ENCODE measurements at regions of chr20 and their contacts with region 1.

Region 1: GRCh38 chr20:14853079-14853478 is 515.7 kb upstream of the FLRT3 start:
- DNase-seq: no peak
- ATAC-seq: no peak

Region 2: DNA sequence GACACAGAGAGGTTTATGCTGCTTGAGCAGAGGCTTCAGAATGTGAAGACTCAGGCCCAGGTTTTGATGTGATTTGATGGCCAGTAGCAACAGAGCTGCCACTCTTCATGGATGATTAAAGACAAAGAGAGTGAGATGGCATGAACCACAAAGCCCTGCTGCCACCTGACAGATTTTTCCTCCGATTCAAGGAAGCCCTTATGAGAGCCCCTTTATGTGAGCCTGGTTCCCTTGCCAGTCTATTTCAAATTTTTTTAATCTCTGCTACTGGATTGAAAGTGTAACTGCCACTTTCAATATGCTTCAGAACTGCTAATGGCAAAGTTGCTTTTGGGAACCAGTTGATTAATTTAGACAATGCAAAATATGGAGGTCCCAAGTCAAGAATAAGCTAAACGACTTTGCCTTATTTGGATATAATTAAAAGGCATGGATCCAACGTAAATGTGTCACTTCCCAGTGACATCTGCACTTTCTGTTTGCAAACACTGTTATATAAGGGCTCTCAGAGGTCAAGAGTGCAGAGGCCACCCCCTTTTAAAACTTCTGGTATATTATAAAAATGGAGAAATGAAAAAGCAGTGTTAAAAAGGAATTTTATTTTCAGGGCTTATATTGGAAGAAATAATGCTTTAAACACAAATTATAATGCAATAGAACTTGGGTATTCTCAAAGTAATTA is 276.7 kb before region 1 on chr20:
- intact Hi-C with region 1: loop called (anchors 5 kb)
- DNase-seq: no peak
- ATAC-seq: no peak